ENCODE measurements at regions of chr17 and their contacts with region 1.

Region 1: DNA sequence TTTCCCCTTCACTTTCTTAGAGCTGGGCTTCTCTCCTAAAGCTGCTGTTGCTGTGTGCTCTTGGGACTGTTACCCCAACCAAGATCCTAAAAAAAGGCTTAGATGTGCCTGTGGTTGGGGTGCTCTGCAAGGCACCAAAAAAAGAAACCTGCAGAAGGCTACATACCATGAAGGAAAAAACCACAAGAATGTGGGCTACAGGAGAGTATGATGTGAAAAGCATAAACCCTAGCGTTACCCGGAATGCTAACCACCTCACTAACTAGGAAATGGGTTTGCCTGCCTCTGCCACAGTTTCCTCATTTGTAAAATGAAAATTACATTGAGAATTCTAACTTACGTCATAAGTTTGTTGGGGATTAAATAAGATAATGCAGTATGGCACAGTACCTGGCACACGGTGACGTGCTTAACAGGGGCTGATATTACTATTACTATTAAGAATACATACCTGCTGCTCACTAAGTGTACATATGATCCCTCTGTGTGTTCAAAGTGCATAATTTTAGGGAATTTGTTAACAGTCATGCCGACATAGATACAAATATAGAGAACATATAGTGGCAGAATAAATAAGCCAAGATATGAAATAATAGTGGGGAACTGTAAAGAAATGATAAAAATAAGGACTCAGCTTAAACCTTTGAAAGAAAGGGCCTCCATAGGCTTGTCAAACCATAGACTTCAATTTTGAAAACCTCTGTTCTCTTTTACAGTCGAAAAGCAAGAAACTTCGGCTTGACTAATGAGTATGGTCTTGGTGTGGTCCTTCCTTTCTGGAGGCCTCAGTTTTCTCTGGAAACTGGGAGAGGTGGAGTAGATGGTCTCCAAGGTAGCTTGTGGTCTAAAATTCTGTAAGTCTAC is 177.8 kb upstream of the TBX2 start:
- DNase-seq: peak; percentile 59
- H3K4me3 Mint-ChIP-seq: peak overlapping the region; percentile 52
- H3K27ac Mint-ChIP-seq: peak overlapping the region; percentile 85
- H3K4me1 Mint-ChIP-seq: peaks cover 46% of the 10 kb centered on the region
- H3K27me3 Mint-ChIP-seq: no peaks in the 10 kb centered on the region

Region 2: GRCh38 chr17:61057257-61057656 is 164.6 kb before region 1 on chr17:
- CTCF ChIA-PET with region 1: no interaction called
- intact Hi-C with region 1: loop called (anchors 2 kb)
- DNase-seq: no peak
- H3K4me3 Mint-ChIP-seq: no peak overlapping the region
- H3K27ac Mint-ChIP-seq: no peak overlapping the region
- H3K4me1 Mint-ChIP-seq: peaks cover 8% of the 10 kb centered on the region
- H3K27me3 Mint-ChIP-seq: no peaks in the 10 kb centered on the region

Region 3: GRCh38 chr17:61160789-61161465 is 60.9 kb before region 1 on chr17:
- CTCF ChIA-PET with region 1: no interaction called
- intact Hi-C with region 1: loop called (anchors 1 kb)
- DNase-seq: no peak
- H3K4me3 Mint-ChIP-seq: no peak overlapping the region
- H3K27ac Mint-ChIP-seq: peak overlapping the region; percentile 61
- H3K4me1 Mint-ChIP-seq: peaks cover 32% of the 10 kb centered on the region
- H3K27me3 Mint-ChIP-seq: no peaks in the 10 kb centered on the region

Region 4: DNA sequence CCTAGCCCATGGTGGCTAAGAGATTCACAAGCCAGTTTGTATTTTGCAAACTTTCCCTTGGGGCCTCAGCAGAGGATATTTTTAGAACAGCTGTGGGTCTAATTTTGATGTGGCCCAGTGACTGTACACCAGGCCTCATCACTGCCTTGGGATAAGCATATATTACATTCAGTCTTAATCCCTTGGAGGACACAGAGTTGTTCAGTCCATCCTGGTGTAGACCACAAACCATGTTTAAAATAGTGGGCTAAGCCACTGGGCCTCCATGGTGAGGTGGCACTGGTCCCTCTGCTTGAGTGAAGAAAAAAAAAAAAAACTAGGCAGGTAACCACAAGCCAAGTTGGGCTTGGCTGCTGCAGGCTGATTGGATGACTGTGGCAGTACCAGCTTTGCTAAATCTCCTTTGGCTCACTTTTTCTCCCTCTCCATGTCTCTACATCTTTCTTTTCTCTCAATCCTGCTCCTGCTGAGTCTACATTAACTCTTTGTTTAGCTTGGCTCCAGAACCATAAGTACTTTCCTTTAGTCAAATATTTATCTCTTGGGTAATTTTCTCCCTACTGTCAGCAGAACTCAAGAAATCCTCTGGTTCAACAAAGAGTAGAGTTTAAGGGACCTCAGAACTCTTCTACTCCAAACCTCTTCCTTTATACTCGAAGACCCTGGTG is 57.8 kb after region 1 on chr17:
- CTCF ChIA-PET with region 1: no interaction called
- intact Hi-C with region 1: loop called (anchors 1 kb)
- DNase-seq: no peak
- H3K4me3 Mint-ChIP-seq: no peak overlapping the region
- H3K27ac Mint-ChIP-seq: peak overlapping the region; percentile 32
- H3K4me1 Mint-ChIP-seq: peaks cover 22% of the 10 kb centered on the region
- H3K27me3 Mint-ChIP-seq: no peaks in the 10 kb centered on the region